K562 (cell line): ENCODE measurements at regions of chr13 and their contacts with region 1.

Region 1: GRCh38 chr13:99176309-99177276 is 24.1 kb upstream of the UBAC2 start:
- DNase-seq: peak; percentile 73 to 78 (median 74)
- ATAC-seq: peak; percentile 96
- H3K4me3 ChIP-seq: no peak overlapping the region
- H3K27ac ChIP-seq: no peak overlapping the region
- H3K4me1 ChIP-seq: peaks cover 0 to 4% of the 10 kb centered on the region in 2 experiments; a peak in 2 of 5 replicates
- H3K27me3 ChIP-seq: no peaks in the 10 kb centered on the region
- CTCF ChIP-seq: peak; percentile 81 to 85 (median 83)
- EP300 ChIP-seq: no peak
- POLR2A ChIP-seq: no peak
- RAD21 ChIP-seq: peak; percentile 55 to 82

Region 2: GRCh38 chr13:99113351-99113750 is 63.2 kb before region 1 on chr13:
- CTCF ChIA-PET with region 1: no interaction called
- POLR2A ChIA-PET with region 1: no interaction called
- in situ Hi-C with region 1: no loop called
- intact Hi-C with region 1: no loop called
- DNase-seq: no peak
- ATAC-seq: no peak
- H3K4me3 ChIP-seq: no peak overlapping the region
- H3K27ac ChIP-seq: no peak overlapping the region
- H3K4me1 ChIP-seq: no peaks in the 10 kb centered on the region
- H3K27me3 ChIP-seq: no peaks in the 10 kb centered on the region
- CTCF ChIP-seq: no peak
- EP300 ChIP-seq: no peak
- POLR2A ChIP-seq: no peak
- RAD21 ChIP-seq: no peak

Region 3: DNA sequence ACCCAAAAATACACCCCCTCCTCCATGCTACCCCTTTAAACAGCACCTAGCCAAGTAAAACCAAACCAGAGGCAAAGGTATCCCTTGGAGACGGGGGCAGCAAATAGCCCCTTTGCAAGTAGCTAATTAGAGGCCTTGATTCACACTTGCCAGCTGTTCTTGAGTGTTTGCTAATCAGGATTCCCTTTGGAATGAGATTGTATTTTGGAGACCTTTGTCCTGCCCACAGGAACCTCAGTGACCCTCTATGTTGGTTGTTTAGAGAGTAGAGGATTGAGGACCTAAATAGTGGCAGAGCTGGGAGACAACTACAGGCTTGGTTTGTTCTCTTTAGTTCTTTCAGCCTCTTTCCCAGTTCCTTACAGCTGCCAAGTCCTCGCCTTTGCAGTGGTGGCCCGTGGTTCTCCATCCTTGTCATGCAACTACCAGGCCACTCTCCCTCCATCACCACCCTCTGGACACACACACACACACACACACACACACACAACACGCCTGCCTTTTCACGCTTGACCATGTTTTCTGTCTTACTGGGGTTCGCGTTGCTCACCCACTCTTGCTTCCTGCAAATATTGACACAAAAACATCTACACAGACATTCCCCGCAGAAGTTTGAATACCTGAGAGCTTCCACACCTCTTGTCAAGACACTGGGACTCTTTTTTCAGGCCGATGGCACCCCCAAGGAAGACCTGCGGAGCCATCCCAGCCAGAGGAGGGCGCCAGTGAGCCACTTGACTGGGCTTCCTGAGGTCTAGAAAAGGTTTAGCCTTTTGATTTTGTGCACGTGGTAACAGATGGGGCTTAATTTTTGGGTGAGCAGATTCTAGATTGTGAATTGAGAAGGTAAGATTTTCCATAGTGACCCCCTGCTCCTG is 210.6 kb after region 1 on chr13:
- CTCF ChIA-PET with region 1: no interaction called
- POLR2A ChIA-PET with region 1: no interaction called
- in situ Hi-C with region 1: no loop called
- intact Hi-C with region 1: loop called (anchors 10 kb)
- DNase-seq: peak; percentile 66 to 78 (median 74)
- ATAC-seq: peak; percentile 92
- H3K4me3 ChIP-seq: no peak overlapping the region
- H3K27ac ChIP-seq: no peak overlapping the region
- H3K4me1 ChIP-seq: no peaks in the 10 kb centered on the region; a peak in 1 of 5 replicates
- H3K27me3 ChIP-seq: no peaks in the 10 kb centered on the region
- CTCF ChIP-seq: peak; percentile 85 to 91 (median 88)
- EP300 ChIP-seq: no peak
- POLR2A ChIP-seq: no peak
- RAD21 ChIP-seq: peak; percentile 54 to 77

Region 4: DNA sequence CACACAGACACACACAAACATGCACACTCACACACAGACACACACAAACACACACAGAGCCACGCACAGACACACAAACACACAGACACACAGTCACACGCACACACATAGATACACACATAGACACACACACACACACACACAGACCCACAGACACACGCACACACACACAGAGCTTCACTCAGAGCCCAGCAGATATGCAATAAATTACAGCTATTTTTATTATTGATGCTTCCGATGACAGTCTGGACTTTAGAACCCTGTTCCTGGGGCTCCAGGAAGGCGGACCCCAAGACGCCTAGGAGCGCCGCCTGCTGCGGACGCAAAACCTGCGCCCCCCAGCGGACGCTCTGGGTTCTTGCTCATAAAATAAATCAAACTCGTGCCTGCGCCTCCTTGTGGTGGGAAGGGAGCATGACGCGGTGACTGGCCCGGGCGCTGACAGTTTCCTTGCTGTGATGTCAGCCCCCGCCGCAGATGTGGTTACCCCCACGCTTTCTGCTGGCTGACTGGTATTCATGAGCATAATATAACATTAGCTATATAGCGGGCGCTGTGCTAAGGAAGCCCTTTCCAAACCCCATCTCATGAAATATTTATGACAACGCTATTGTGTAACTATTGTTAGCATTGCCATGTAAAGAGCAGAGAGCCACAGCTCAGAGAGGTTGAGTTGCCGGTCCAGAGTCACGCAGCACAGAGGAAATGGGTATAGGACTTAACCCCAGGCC is 260.3 kb after region 1 on chr13:
- CTCF ChIA-PET with region 1: interaction called, 15 read pairs
- POLR2A ChIA-PET with region 1: no interaction called
- in situ Hi-C with region 1: loop called (anchors 10 kb)
- intact Hi-C with region 1: loop called (anchors 2 kb)
- DNase-seq: peak; percentile 75 to 89 (median 76)
- ATAC-seq: peak; percentile 76
- H3K4me3 ChIP-seq: no peak overlapping the region
- H3K27ac ChIP-seq: no peak overlapping the region; the same call in 2 of the 3 replicates
- H3K4me1 ChIP-seq: peaks cover 23 to 28% of the 10 kb centered on the region in 2 experiments; a peak in 4 of 5 replicates
- H3K27me3 ChIP-seq: peaks cover 0 to 13% of the 10 kb centered on the region in 2 experiments; a peak in 2 of 5 replicates
- CTCF ChIP-seq: peak; percentile 99 to 100 (median 100)
- EP300 ChIP-seq: 0 out of 2 replicates have a peak, but pooled peaks have one; percentile 6
- POLR2A ChIP-seq: no peak
- RAD21 ChIP-seq: peak; percentile 92 to 95

Region 5: DNA sequence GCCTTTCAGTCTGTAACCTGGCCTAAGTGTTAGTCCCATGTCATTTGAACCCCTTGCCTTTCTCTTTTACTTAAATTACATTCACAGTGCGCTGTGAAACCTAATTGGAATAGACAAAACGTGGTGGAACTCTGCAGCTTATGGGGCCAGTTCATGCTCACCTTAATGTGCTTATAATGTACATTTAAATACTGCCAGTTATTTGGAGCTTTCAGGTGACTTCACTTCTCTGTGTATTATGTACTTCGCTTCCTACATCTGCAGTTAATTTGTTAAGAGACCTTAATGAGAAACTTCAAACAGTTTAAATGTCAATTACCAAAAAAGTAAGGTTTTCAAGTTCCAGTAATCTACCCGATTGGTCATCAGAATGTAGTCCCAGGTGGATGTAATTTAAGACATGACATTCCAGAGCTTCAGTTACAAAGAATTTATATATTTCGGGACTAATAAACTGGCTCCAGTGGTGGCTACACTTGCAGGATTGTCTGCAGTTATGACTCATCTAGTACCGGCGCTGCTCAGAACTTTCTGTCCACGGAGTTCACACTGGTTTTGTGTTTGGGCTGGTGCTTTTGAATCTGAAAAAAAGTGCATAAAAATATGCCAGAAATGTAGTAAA is 450.0 kb after region 1 on chr13:
- CTCF ChIA-PET with region 1: no interaction called
- POLR2A ChIA-PET with region 1: no interaction called
- in situ Hi-C with region 1: no loop called
- intact Hi-C with region 1: no loop called
- DNase-seq: no peak
- ATAC-seq: no peak
- H3K4me3 ChIP-seq: no peak overlapping the region
- H3K27ac ChIP-seq: no peak overlapping the region
- H3K4me1 ChIP-seq: no peaks in the 10 kb centered on the region; a peak in 1 of 5 replicates
- H3K27me3 ChIP-seq: peaks cover 0 to 8% of the 10 kb centered on the region in 2 experiments; a peak in 1 of 5 replicates
- CTCF ChIP-seq: no peak
- EP300 ChIP-seq: no peak
- POLR2A ChIP-seq: no peak
- RAD21 ChIP-seq: no peak